ENCODE measurements at regions of chr6 and their contacts with region 1.

Region 1: GRCh38 chr6:24340998-24341938 is 16.6 kb downstream of the DCDC2 start:
- DNase-seq: peak; percentile 65 to 95
- ATAC-seq: peak; percentile 97 to 99
- H3K4me3 ChIP-seq: no peak overlapping the region
- H3K27ac ChIP-seq: peak overlapping the region; percentile 82 to 90
- H3K4me1 ChIP-seq: peaks cover 50% of the 10 kb centered on the region
- CTCF ChIP-seq: no peak
- EP300 ChIP-seq: peak; percentile 97
- POLR2A ChIP-seq: no peak
- RAD21 ChIP-seq: peak; percentile 15 to 48; a peak in 2 of 5 replicates

Region 2: DNA sequence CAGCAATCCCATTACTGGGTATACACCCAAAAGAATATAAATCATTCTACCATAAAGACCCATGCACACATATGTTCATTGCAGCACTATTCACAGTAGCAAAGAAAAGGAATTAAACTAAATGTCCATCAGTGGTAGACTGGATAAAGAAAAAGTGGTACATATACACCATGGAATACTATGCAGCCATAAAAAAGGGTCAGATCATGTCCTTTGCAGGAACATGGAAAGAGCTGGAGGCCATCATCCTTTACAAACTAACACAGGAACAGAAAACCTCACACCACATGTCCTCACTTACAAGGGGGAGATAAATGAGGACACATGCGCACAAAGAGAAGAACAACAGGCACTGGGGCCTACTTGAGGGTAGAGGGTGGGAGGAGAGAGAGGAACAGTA is 44.3 kb before region 1 on chr6:
- CTCF ChIA-PET with region 1: no interaction called
- POLR2A ChIA-PET with region 1: no interaction called
- DNase-seq: no peak
- ATAC-seq: no peak
- H3K4me3 ChIP-seq: no peak overlapping the region
- H3K27ac ChIP-seq: no peak overlapping the region
- H3K4me1 ChIP-seq: no peaks in the 10 kb centered on the region; the same call in 2 of the 3 replicates
- CTCF ChIP-seq: no peak
- EP300 ChIP-seq: no peak
- POLR2A ChIP-seq: no peak
- RAD21 ChIP-seq: no peak

Region 3: GRCh38 chr6:24353861-24354260 is 12.6 kb after region 1 on chr6:
- CTCF ChIA-PET with region 1: interaction called, 10 read pairs
- POLR2A ChIA-PET with region 1: no interaction called
- DNase-seq: no peak
- ATAC-seq: no peak
- H3K4me3 ChIP-seq: no peak overlapping the region
- H3K27ac ChIP-seq: no peak overlapping the region
- H3K4me1 ChIP-seq: no peaks in the 10 kb centered on the region; the same call in 1 of the 3 replicates
- CTCF ChIP-seq: no peak
- EP300 ChIP-seq: no peak
- POLR2A ChIP-seq: no peak
- RAD21 ChIP-seq: no peak